ENCODE measurements at regions of chr19 and their contacts with region 1.

Region 1: DNA sequence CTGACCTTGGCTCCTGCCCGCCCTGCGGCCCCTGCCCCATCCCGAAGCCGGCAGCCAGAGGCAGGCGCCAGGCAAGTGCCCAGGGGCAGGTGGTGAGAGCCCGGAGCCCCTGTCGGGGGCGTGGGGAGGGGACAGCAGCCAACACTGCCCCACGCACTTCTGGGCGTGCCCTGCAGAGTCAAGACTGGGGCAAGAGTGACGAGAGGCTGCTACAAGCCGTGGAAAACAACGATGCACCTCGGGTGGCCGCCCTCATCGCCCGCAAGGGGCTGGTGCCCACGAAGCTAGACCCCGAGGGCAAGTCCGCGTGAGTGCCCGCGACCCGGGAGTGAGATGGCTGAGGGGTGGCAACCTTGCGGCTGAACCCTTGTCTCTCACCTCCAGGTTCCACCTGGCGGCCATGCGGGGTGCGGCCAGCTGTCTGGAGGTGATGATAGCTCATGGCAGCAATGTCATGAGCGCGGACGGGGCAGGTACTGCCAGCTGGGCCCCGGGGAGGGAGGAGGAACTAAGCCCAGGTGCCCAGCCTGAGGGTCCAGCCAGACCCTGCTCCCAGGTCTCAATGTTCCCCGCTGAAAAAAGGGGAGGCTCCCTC is 17.3 kb downstream of the ANKRD24 start:
- DNase-seq: no peak
- ATAC-seq: peak; percentile 54; the same call in 1 of the 2 replicates
- H3K4me3 ChIP-seq: no peak overlapping the region
- H3K27ac ChIP-seq: no peak overlapping the region
- H3K4me1 ChIP-seq: peaks cover 3% of the 10 kb centered on the region; the same call in 1 of the 2 replicates
- H3K27me3 ChIP-seq: peaks cover 3% of the 10 kb centered on the region; the same call in 1 of the 2 replicates
- CTCF ChIP-seq: no peak; the same call in 1 of the 2 replicates

Region 2: DNA sequence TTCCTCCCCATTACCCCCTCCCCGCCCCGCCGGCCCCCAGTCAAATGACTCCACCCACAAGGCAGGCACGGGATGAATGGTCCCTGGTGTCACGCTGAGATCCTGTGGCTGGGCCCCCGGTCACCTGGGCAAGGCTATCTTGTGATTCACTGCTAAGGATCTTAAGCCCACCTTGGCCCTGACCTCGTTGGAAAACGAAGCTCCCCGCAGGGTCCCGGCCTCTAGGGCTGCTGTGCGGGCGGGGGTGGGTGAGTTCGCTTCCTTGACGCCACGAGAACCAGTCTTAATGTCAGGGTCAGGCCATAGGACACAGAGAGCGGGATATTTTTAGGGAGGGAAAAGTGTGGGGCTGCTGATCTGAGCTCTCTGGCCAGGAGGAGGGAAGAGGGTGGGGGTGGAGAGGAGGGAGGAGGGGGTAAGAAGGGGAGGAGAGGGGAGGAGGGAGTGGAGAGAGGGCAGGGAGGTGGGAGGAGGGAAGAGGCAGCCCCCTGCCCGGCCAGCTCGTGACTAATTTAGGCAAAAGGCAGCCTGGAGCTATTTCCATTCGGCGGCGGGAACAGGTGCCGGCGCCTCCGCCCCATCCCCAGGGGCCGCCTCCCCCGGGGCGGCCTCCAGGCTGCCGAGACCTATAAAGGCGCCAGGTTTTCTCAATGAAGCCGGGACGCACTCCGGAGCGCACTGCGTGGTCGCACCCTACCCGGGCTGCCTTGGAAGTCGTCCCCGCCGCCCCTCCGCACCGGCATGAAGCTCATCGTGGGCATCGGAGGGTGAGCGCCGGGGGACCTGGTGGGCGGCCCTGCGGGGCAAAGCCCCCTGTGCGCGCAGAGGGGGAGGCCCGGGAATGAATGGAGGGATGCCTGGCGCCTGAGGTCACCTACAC is 266.6 kb before region 1 on chr19 and contains the start of gene NMRK2:
- CTCF ChIA-PET with region 1: no interaction called
- POLR2A ChIA-PET with region 1: no interaction called
- in situ Hi-C with region 1: no loop called
- intact Hi-C with region 1: no loop called
- DNase-seq: no peak
- ATAC-seq: no peak
- H3K4me3 ChIP-seq: no peak within 1 kb of the TSS
- H3K27ac ChIP-seq: no peak within 1 kb of the TSS
- H3K4me1 ChIP-seq: no peaks in the 10 kb centered on the region
- H3K27me3 ChIP-seq: no peaks in the 10 kb centered on the region
- CTCF ChIP-seq: no peak
- total RNA-seq, gene NMRK2: 0.21 TPM

Region 3: DNA sequence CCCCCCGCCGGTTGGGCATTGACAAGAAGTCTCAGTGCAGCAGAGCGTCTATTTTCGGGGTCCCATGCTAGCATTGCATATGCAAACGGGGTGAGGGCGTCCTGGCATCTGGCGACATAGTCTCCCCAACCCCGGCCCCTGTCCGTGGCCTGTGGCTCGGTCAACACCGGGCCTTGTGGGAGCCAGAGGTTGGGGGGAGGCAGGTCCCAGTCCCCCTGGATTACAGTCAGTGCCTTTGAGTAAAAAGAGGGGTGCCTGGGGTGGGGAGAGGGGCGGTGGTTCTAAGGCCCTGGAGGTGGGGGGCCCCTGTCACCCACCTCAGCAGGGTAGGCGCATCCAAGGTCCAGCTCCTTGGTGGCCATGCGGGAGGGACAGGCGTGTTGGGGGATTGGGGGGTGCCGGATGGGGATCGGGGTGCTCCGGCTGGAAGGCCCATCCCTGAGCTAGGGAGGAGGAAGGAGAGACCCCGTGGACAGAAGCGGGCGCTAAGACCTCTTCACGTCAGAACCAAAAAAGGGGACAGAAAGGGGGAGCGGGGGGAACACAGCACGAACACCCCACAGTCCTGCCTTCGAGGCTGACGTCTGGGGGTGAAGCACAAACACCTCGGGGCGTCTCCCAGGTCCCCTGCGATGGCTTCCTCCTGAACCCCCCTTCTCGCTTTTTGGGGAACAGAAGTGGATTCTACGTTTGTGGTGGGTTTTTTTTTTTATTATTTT is 154.0 kb before region 1 on chr19:
- CTCF ChIA-PET with region 1: no interaction called
- POLR2A ChIA-PET with region 1: interaction called, 11 read pairs
- in situ Hi-C with region 1: no loop called
- intact Hi-C with region 1: no loop called
- DNase-seq: no peak
- ATAC-seq: no peak
- H3K4me3 ChIP-seq: no peak overlapping the region
- H3K27ac ChIP-seq: no peak overlapping the region
- H3K4me1 ChIP-seq: no peaks in the 10 kb centered on the region
- H3K27me3 ChIP-seq: no peaks in the 10 kb centered on the region
- CTCF ChIP-seq: no peak

Region 4: GRCh38 chr19:4415352-4415751 is 215.6 kb after region 1 on chr19:
- CTCF ChIA-PET with region 1: no interaction called
- POLR2A ChIA-PET with region 1: no interaction called
- in situ Hi-C with region 1: no loop called
- intact Hi-C with region 1: no loop called
- DNase-seq: no peak
- ATAC-seq: no peak
- H3K4me3 ChIP-seq: no peak overlapping the region
- H3K27ac ChIP-seq: no peak overlapping the region
- H3K4me1 ChIP-seq: no peaks in the 10 kb centered on the region
- H3K27me3 ChIP-seq: no peaks in the 10 kb centered on the region
- CTCF ChIP-seq: no peak